HAP-1 (cell line): ENCODE measurements at regions of chrX and their contacts with region 1.

Region 1: DNA sequence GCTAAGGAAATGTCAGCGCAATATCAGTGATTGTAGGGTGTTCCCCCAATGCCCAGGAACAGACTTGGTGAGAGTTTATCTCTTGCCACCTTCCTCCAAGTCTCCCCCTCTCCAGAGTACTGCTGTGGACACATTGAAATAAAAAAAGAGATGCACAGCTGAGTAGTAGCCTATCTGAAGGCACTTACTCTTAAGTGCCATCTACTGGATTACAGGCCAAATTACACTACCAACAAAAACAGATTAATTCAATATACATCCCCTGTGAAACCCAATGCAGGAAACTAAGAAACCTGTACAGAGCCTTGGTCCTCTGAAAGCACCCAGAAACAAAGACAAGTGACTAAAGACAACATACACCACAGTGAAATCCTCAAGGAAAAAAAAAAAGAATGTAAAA is 460.3 kb downstream of the ZIC3 start:
- DNase-seq: peak in 1 of 2 experiments; percentile 64
- H3K4me3 ChIP-seq: no peak overlapping the region
- H3K4me1 ChIP-seq: peaks cover 4% of the 10 kb centered on the region; the same call in 1 of the 2 replicates
- H3K27me3 ChIP-seq: no peaks in the 10 kb centered on the region

Region 2: DNA sequence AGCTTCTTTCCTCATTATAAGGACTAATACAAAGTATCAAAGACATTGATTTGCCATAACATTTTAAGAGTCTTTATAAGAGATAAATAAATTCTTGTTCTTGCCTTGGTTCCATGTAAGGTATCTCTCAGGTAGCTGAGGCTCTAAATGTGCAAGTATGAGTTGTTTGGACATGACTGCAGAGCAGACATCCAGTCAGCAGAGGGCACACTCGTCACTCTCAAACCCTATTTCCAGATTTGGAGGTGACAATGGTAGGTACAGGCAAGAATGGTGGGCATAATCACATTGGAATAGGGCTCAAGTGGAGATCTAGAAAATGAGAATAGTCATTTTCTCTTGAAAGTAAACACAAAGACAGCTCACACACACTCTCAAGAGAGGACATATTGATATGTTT is 593.6 kb before region 1 on chrX:
- in situ Hi-C with region 1: loop called (anchors 10 kb)
- DNase-seq: peak; percentile 48 to 70
- H3K4me3 ChIP-seq: no peak overlapping the region
- H3K4me1 ChIP-seq: no peaks in the 10 kb centered on the region
- H3K27me3 ChIP-seq: no peaks in the 10 kb centered on the region; the same call in 1 of the 2 replicates

Region 3: DNA sequence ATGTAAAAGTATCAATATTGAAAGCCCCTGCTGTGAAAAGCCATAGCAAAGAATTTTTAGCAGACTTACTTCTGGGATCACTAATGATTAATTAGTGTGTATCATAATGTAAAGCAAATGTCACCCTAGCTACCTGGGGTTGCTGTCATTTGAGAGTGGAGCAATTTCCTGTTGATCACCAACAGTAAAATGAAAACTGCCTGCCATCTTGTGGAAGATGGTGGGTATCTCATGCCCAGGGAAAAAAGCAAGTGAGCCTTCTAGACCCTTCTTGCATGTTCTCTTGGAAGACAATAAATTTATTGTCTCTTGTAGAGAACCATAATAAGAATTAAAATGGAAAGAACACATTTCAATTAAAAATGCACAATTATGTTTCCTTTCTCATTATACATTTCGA is 100.1 kb before region 1 on chrX:
- in situ Hi-C with region 1: loop called (anchors 10 kb)
- DNase-seq: peak; percentile 50 to 56
- H3K4me3 ChIP-seq: no peak overlapping the region
- H3K4me1 ChIP-seq: no peaks in the 10 kb centered on the region
- H3K27me3 ChIP-seq: no peaks in the 10 kb centered on the region